Caco-2 (cell line): ENCODE measurements at regions of chr10 and their contacts with region 1.

Region 1: DNA sequence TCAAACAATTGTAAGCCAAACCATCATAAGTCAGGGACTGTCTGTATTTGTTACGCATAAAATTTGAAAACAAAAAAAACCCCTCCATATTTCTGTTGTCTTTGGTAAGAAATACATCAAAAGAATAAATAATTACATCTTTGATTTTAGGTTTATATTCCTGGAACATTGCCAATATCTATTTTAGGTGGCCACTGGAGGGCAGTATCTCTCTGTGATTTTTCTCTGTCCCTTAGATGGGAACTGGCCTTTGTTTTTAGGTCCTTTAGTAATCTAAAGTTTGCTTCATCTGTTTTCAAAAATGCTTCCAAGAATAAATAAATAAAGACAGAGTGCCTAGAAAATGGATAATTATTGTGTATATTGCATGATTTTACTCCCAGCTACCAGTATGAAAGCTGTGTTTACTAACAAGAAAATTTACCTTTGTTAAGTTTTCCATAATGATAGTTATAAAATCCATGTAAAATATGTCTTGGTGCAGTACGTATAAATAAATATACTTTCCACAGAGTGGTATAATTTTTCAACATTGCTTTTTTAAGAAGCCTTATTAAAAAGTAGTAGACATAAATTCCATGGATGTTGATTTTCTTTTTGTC is 64.2 kb downstream of the PHYHIPL start:
- DNase-seq: peak in 1 of 2 experiments; percentile 69
- H3K4me3 ChIP-seq: no peak overlapping the region
- H3K4me3 Mint-ChIP-seq: no peak overlapping the region
- H3K27ac Mint-ChIP-seq: no peak overlapping the region
- H3K4me1 ChIP-seq: no peaks in the 10 kb centered on the region
- H3K4me1 Mint-ChIP-seq: peaks cover 13% of the 10 kb centered on the region
- H3K27me3 ChIP-seq: no peaks in the 10 kb centered on the region
- H3K27me3 Mint-ChIP-seq: no peaks in the 10 kb centered on the region
- CTCF ChIP-seq: peak; percentile 82 to 89

Region 2: DNA sequence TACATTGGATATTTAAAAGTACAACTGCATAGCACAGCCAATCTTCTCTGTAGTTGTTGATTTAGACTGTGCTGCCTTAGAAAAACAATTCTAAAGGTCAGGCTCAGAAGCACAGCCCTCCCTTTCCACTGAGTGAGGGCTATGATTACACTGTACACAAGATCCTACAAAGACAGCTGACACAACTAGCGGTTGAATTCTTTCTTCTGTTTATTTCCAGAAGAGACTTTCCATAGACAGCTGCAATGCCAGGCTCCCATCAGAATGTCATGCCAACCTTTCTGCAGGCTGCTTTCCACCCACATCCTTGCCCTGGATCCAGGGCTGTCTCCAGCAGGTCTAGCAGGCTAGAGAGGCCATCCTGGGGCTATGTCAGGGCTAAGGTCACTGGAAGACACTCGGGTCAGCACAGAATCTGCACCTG is 82.4 kb after region 1 on chr10:
- CTCF ChIA-PET with region 1: no interaction called
- POLR2A ChIA-PET with region 1: no interaction called
- intact Hi-C with region 1: no loop called
- DNase-seq: peak in 1 of 2 experiments; percentile 42
- H3K4me3 ChIP-seq: no peak overlapping the region
- H3K4me3 Mint-ChIP-seq: no peak overlapping the region
- H3K27ac Mint-ChIP-seq: no peak overlapping the region
- H3K4me1 ChIP-seq: peaks cover 12% of the 10 kb centered on the region
- H3K4me1 Mint-ChIP-seq: peaks cover 7% of the 10 kb centered on the region
- H3K27me3 ChIP-seq: no peaks in the 10 kb centered on the region; the same call in 1 of the 2 replicates
- H3K27me3 Mint-ChIP-seq: peaks cover 2% of the 10 kb centered on the region
- CTCF ChIP-seq: no peak

Region 3: GRCh38 chr10:59346321-59346720 is 105.6 kb after region 1 on chr10:
- CTCF ChIA-PET with region 1: no interaction called
- POLR2A ChIA-PET with region 1: no interaction called
- intact Hi-C with region 1: no loop called
- DNase-seq: no peak
- H3K4me3 ChIP-seq: no peak overlapping the region
- H3K4me3 Mint-ChIP-seq: no peak overlapping the region
- H3K27ac Mint-ChIP-seq: no peak overlapping the region
- H3K4me1 ChIP-seq: no peaks in the 10 kb centered on the region
- H3K4me1 Mint-ChIP-seq: no peaks in the 10 kb centered on the region
- H3K27me3 ChIP-seq: no peaks in the 10 kb centered on the region
- H3K27me3 Mint-ChIP-seq: peaks cover 22% of the 10 kb centered on the region
- CTCF ChIP-seq: no peak

Region 4: GRCh38 chr10:59465088-59465487 is 224.4 kb after region 1 on chr10:
- CTCF ChIA-PET with region 1: no interaction called
- POLR2A ChIA-PET with region 1: no interaction called
- intact Hi-C with region 1: loop called (anchors 1 kb)
- DNase-seq: peak in 1 of 2 experiments; percentile 29
- H3K4me3 ChIP-seq: no peak overlapping the region
- H3K4me3 Mint-ChIP-seq: no peak overlapping the region
- H3K27ac Mint-ChIP-seq: no peak overlapping the region
- H3K4me1 ChIP-seq: no peaks in the 10 kb centered on the region
- H3K4me1 Mint-ChIP-seq: no peaks in the 10 kb centered on the region
- H3K27me3 ChIP-seq: no peaks in the 10 kb centered on the region; the same call in 1 of the 2 replicates
- H3K27me3 Mint-ChIP-seq: peaks cover 10% of the 10 kb centered on the region
- CTCF ChIP-seq: peak; percentile 25 to 57

Region 5: GRCh38 chr10:59817773-59818172 is 577.1 kb after region 1 on chr10:
- CTCF ChIA-PET with region 1: no interaction called
- POLR2A ChIA-PET with region 1: no interaction called
- intact Hi-C with region 1: loop called (anchors 10 kb)
- DNase-seq: no peak
- H3K4me3 ChIP-seq: no peak overlapping the region
- H3K4me3 Mint-ChIP-seq: no peak overlapping the region
- H3K27ac Mint-ChIP-seq: no peak overlapping the region
- H3K4me1 ChIP-seq: no peaks in the 10 kb centered on the region
- H3K4me1 Mint-ChIP-seq: no peaks in the 10 kb centered on the region
- H3K27me3 ChIP-seq: no peaks in the 10 kb centered on the region
- H3K27me3 Mint-ChIP-seq: no peaks in the 10 kb centered on the region
- CTCF ChIP-seq: no peak